Activated CD4-positive, alpha-beta T cell treated with anti-CD3 and anti-CD28 coated beads for 36 hours (primary cell): ENCODE measurements at regions of chr20 and their contacts with region 1.

Region 1: GRCh38 chr20:1671891-1672669 is 14.5 kb upstream of the SIRPG start:
- DNase-seq: peak; percentile 70
- ATAC-seq: peak; percentile 70
- H3K4me3 Mint-ChIP-seq: peak overlapping the region; percentile 57
- H3K27ac Mint-ChIP-seq: peak overlapping the region; percentile 97
- H3K4me1 Mint-ChIP-seq: peaks cover 99% of the 10 kb centered on the region
- H3K27me3 Mint-ChIP-seq: no peaks in the 10 kb centered on the region

Region 2: DNA sequence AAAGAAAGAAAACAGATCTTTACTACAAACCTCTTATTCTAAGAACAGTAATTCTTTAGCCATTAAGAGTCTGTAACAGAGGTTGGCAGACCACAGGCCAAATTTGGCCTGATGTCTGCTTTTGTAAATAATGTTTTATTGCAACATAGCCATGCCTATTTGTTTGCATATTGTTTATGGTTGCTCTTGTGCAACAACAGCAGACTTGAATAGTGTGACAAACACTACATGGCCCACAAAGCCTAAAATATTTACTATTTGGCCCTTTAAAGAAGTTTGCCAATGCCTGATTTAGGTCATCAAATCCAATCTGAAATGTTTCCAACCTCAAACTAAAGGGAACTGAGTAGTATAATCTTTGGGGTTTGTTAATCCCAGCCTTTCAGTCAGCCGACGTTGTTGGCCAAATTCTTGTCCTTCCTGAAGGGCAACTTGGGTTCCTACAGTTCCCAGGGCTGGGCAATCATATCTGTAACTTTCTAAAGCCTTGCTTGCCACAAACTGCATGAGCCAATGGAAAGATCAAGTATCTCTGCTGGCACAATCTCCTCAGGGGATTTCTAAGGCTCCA is 1175.9 kb before region 1 on chr20:
- CTCF ChIA-PET with region 1: no interaction called
- POLR2A ChIA-PET with region 1: no interaction called
- intact Hi-C with region 1: no loop called
- DNase-seq: no peak
- ATAC-seq: no peak
- H3K4me3 Mint-ChIP-seq: no peak overlapping the region
- H3K27ac Mint-ChIP-seq: no peak overlapping the region
- H3K4me1 Mint-ChIP-seq: no peaks in the 10 kb centered on the region
- H3K27me3 Mint-ChIP-seq: no peaks in the 10 kb centered on the region

Region 3: GRCh38 chr20:1651268-1652058 is 20.6 kb before region 1 on chr20:
- CTCF ChIA-PET with region 1: interaction called, 4 read pairs
- POLR2A ChIA-PET with region 1: no interaction called
- intact Hi-C with region 1: loop called in 1 of 2 experiments (anchors 2 kb)
- DNase-seq: no peak
- ATAC-seq: no peak
- H3K4me3 Mint-ChIP-seq: no peak overlapping the region
- H3K27ac Mint-ChIP-seq: peak overlapping the region; percentile 67
- H3K4me1 Mint-ChIP-seq: peaks cover 86% of the 10 kb centered on the region
- H3K27me3 Mint-ChIP-seq: no peaks in the 10 kb centered on the region